ENCODE measurements at regions of chr21 and their contacts with region 1.

Region 1: DNA sequence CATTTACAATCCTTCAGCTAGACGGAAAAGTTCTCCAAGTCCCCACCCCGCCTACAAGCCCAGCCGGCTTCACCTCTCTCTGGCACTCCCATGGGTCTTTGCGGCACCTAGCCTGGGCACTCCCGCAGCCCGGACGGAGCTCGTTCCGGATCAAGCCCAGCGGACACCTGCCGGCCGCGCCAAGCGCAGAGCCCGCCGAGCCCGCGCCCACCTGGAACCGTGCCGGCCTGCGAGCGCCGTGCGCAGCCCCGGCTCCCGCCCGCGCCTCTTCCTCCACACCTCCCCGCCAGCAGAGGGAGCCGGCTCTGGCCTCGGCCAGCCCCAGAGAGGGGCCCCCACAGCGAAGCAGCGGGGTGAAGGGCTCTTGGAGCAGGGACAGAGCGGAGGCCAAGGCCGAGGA is 50.0 kb upstream of the KRTAP19-8 start:
- DNase-seq: no peak
- H3K4me3 ChIP-seq: no peak overlapping the region
- H3K27ac ChIP-seq: no peak overlapping the region
- H3K4me1 ChIP-seq: no peaks in the 10 kb centered on the region
- H3K27me3 ChIP-seq: no peaks in the 10 kb centered on the region
- CTCF ChIP-seq: no peak
- POLR2A ChIP-seq: no peak

Region 2: DNA sequence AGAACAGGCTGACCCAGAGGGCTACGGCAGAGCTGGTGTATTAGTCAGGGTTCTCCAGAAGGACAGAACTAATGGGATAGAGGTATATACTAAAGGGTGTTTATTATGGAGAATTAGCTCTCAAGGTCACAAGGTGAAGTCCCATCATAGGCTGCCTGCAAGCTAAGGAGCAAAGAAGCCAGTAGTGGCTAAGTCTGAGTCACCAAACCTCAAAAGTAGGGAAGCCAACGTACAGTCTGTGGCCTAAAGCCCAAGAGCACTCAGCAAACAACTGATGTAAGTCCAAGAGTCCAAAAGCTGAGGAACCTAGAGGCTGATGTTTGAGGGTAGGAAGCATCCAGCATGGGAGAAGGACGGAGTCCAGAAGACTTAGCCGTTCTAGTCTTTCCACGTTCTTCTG is 1610.4 kb before region 1 on chr21:
- CTCF ChIA-PET with region 1: no interaction called
- POLR2A ChIA-PET with region 1: no interaction called
- dilution Hi-C with region 1: no loop called
- intact Hi-C with region 1: loop called (anchors 2 kb)
- DNase-seq: no peak
- H3K4me3 ChIP-seq: no peak overlapping the region
- H3K27ac ChIP-seq: no peak overlapping the region
- H3K4me1 ChIP-seq: no peaks in the 10 kb centered on the region
- H3K27me3 ChIP-seq: peaks cover 0 to 2% of the 10 kb centered on the region in 2 experiments
- CTCF ChIP-seq: no peak
- POLR2A ChIP-seq: no peak

Region 3: DNA sequence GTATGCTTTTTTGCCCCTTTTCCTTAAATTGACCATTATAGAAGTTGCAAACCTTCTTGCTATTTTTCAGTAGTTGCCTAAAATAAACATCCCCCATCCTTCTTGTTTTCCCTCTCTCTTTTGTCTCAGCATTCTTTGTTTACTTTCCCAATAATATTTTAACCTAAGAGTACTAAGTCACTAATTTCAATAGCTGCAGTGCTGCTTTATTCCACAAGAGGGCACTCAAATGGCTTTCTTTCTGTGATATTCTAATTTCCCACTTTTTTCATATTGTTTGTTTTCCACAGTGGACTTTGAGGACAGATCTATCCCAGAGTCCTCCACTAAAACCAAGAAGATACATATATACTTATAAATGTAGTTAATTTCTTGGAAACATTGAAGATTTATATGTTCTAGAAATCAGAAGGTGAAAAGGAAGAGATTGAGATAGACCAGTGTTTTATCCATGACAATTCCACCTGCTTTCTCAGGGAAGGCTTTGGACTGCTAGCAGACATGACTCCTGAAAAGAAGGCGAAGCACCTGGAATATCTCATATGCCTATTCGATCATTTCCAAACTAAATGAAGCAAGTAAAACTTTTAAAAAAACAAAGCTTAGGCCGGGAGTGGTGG is 1043.8 kb before region 1 on chr21:
- CTCF ChIA-PET with region 1: interaction called, 35 read pairs
- POLR2A ChIA-PET with region 1: no interaction called
- dilution Hi-C with region 1: no loop called
- intact Hi-C with region 1: no loop called
- DNase-seq: peak; percentile 6
- H3K4me3 ChIP-seq: no peak overlapping the region
- H3K27ac ChIP-seq: no peak overlapping the region
- H3K4me1 ChIP-seq: no peaks in the 10 kb centered on the region
- H3K27me3 ChIP-seq: no peaks in the 10 kb centered on the region
- CTCF ChIP-seq: peak; percentile 49 to 53
- POLR2A ChIP-seq: no peak

Region 4: DNA sequence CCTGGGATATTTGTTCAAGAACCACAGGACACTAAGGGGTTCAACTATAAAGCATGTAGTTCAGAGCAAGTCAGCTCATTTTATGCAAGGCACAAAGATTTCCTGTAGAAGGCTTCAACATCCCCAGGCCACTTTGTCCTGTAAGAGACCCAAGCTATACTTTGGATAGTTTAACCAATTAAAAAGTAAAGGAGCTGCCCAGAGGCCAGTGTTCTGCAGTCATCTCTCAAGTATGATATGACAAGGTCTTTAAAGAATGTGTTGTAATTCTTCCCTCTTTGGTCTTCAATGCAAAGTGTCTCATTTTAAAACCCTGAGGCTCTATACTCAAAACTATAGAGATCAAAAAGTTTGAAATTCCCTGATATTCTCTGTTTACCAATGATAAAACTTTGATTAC is 411.6 kb before region 1 on chr21:
- CTCF ChIA-PET with region 1: no interaction called
- POLR2A ChIA-PET with region 1: no interaction called
- dilution Hi-C with region 1: no loop called
- intact Hi-C with region 1: no loop called
- DNase-seq: no peak
- H3K4me3 ChIP-seq: no peak overlapping the region
- H3K27ac ChIP-seq: no peak overlapping the region
- H3K4me1 ChIP-seq: no peaks in the 10 kb centered on the region
- H3K27me3 ChIP-seq: no peaks in the 10 kb centered on the region
- CTCF ChIP-seq: no peak
- POLR2A ChIP-seq: no peak

Region 5: GRCh38 chr21:30831194-30831765 is 257.0 kb before region 1 on chr21:
- CTCF ChIA-PET with region 1: no interaction called
- POLR2A ChIA-PET with region 1: no interaction called
- dilution Hi-C with region 1: no loop called
- intact Hi-C with region 1: loop called (anchors 5 kb)
- DNase-seq: no peak
- H3K4me3 ChIP-seq: no peak overlapping the region
- H3K27ac ChIP-seq: no peak overlapping the region
- H3K4me1 ChIP-seq: no peaks in the 10 kb centered on the region
- H3K27me3 ChIP-seq: no peaks in the 10 kb centered on the region
- CTCF ChIP-seq: peak in 1 of 2 donors; percentile 21
- POLR2A ChIP-seq: no peak

Region 6: GRCh38 chr21:31012133-31013089 is 75.9 kb before region 1 on chr21:
- CTCF ChIA-PET with region 1: no interaction called
- POLR2A ChIA-PET with region 1: no interaction called
- dilution Hi-C with region 1: no loop called
- intact Hi-C with region 1: no loop called
- DNase-seq: no peak
- H3K4me3 ChIP-seq: no peak overlapping the region
- H3K27ac ChIP-seq: no peak overlapping the region
- H3K4me1 ChIP-seq: no peaks in the 10 kb centered on the region
- H3K27me3 ChIP-seq: no peaks in the 10 kb centered on the region
- CTCF ChIP-seq: no peak
- POLR2A ChIP-seq: no peak

Region 7: GRCh38 chr21:31043471-31043870 is 44.8 kb before region 1 on chr21:
- CTCF ChIA-PET with region 1: no interaction called
- POLR2A ChIA-PET with region 1: no interaction called
- dilution Hi-C with region 1: no loop called
- intact Hi-C with region 1: no loop called
- DNase-seq: no peak
- H3K4me3 ChIP-seq: no peak overlapping the region
- H3K27ac ChIP-seq: no peak overlapping the region
- H3K4me1 ChIP-seq: no peaks in the 10 kb centered on the region
- H3K27me3 ChIP-seq: no peaks in the 10 kb centered on the region
- CTCF ChIP-seq: no peak
- POLR2A ChIP-seq: no peak

Region 8: DNA sequence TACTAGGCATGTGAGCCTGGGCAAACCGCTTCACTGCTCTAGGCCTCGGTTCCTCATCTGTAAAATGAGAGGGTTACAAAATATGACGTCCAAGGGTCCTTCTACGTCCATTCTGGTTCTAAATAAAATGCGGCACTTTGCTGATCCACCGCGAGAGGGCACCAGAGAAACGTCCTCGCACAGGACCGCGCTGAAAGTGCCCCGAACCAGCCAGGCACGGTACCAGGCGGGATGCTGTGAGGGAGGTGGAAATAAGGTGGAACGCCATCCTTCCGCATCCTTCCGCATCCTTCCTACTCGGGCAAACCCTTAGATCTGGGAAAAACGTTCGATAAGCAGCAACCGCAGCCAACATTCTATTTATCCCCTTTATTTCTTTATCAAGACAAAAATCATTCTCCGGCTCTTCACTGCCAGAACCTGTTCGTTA is 10.3 kb after region 1 on chr21:
- CTCF ChIA-PET with region 1: interaction called, 10 read pairs
- POLR2A ChIA-PET with region 1: no interaction called
- dilution Hi-C with region 1: no loop called
- intact Hi-C with region 1: no loop called
- DNase-seq: peak; percentile 49
- H3K4me3 ChIP-seq: no peak overlapping the region
- H3K27ac ChIP-seq: no peak overlapping the region
- H3K4me1 ChIP-seq: no peaks in the 10 kb centered on the region
- H3K27me3 ChIP-seq: no peaks in the 10 kb centered on the region
- CTCF ChIP-seq: peak; percentile 78 to 80
- POLR2A ChIP-seq: no peak

Measured in endothelial cell of umbilical vein (primary cell).